ENCODE measurements at regions of chr16 and their contacts with region 1.

Region 1: DNA sequence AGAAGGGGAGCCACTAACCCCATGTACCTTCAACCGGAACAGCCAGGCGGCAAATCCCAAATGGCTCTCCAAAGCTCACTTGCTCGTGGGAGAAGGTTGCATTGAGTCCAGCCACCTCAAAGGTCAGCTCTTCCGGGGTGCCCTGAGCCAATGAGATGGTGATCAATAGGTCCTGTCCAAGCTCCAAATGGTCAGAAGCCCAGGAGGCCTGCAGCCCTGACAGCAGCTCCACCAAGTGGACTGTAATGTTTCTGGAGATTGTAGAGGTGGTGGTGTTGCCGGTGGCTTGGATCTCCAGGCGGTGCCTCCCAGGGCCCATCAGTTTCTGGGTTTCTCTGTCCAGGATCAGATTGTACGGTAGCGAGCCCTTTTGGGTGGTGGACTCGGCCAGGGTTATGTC is 39.9 kb upstream of the BCO1 start:
- DNase-seq: no peak
- H3K4me3 ChIP-seq: no peak overlapping the region
- H3K4me3 Mint-ChIP-seq: no peak overlapping the region
- H3K27ac ChIP-seq: no peak overlapping the region
- H3K27ac Mint-ChIP-seq: no peak overlapping the region
- H3K4me1 ChIP-seq: no peaks in the 10 kb centered on the region
- H3K4me1 Mint-ChIP-seq: no peaks in the 10 kb centered on the region
- H3K27me3 ChIP-seq: no peaks in the 10 kb centered on the region
- H3K27me3 Mint-ChIP-seq: peaks cover 23 to 29% of the 10 kb centered on the region in 2 donors

Region 2: GRCh38 chr16:81214745-81215166 is 16.1 kb after region 1 on chr16:
- CTCF ChIA-PET with region 1: no interaction called
- POLR2A ChIA-PET with region 1: interaction called, 14 read pairs
- DNase-seq: no peak
- H3K4me3 ChIP-seq: no peak overlapping the region
- H3K4me3 Mint-ChIP-seq: no peak overlapping the region
- H3K27ac ChIP-seq: no peak overlapping the region
- H3K27ac Mint-ChIP-seq: peak overlapping the region in 1 of 8 donors; percentile 54
- H3K4me1 ChIP-seq: no peaks in the 10 kb centered on the region
- H3K4me1 Mint-ChIP-seq: no peaks in the 10 kb centered on the region
- H3K27me3 ChIP-seq: peaks cover 4% of the 10 kb centered on the region
- H3K27me3 Mint-ChIP-seq: peaks cover 6 to 27% of the 10 kb centered on the region in 2 donors